Activated CD8-positive, alpha-beta T cell treated with anti-CD3 and anti-CD28 coated beads, Interleukin-2, amount 10 ng/mL, durations not matched to agents 7 days and 5 days (primary cell): ENCODE measurements at regions of chr4 and their contacts with region 1.

Region 1: GRCh38 chr4:118352843-118353533 is at the start of gene PRSS12:
- DNase-seq: peak; percentile 69
- ATAC-seq: peak; percentile 93
- H3K4me3 Mint-ChIP-seq: peak within 1 kb of the TSS; percentile 61
- H3K27ac Mint-ChIP-seq: no peak within 1 kb of the TSS
- H3K4me1 Mint-ChIP-seq: peaks cover 10% of the 10 kb centered on the region
- H3K27me3 Mint-ChIP-seq: peaks cover 64% of the 10 kb centered on the region
- total RNA-seq, gene PRSS12: not detected

Region 2: GRCh38 chr4:118278473-118279274 is 74.3 kb before region 1 on chr4:
- CTCF ChIA-PET with region 1: interaction called, 11 read pairs
- POLR2A ChIA-PET with region 1: no interaction called
- DNase-seq: peak; percentile 99
- ATAC-seq: peak; percentile 97
- H3K4me3 Mint-ChIP-seq: peak overlapping the region; percentile 88
- H3K27ac Mint-ChIP-seq: peak overlapping the region; percentile 95
- H3K4me1 Mint-ChIP-seq: peaks cover 28% of the 10 kb centered on the region
- H3K27me3 Mint-ChIP-seq: no peaks in the 10 kb centered on the region

Region 3: GRCh38 chr4:118335324-118335723 is 17.7 kb before region 1 on chr4:
- CTCF ChIA-PET with region 1: interaction called, 11 read pairs
- POLR2A ChIA-PET with region 1: no interaction called
- DNase-seq: no peak
- ATAC-seq: no peak
- H3K4me3 Mint-ChIP-seq: no peak overlapping the region
- H3K27ac Mint-ChIP-seq: no peak overlapping the region
- H3K4me1 Mint-ChIP-seq: no peaks in the 10 kb centered on the region
- H3K27me3 Mint-ChIP-seq: peaks cover 14% of the 10 kb centered on the region

Region 4: DNA sequence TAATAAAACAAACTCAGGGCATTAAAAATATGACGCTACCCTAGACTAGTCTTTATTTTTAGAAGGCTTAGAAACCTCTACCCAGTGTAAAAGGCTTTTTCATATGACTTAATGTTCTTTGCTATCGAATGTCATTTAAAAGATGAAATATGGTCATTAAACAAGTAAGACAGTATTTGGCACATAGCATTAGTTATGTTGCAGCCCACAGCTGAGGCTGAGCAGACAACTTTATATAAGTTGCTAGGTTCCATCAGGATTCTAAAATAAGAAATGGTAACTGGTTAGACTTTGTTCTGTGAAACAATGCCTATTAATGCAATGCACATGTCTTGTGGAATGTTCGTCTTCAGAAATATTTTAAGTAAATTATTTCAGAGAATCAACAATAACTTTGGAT is 10.2 kb after region 1 on chr4:
- CTCF ChIA-PET with region 1: interaction called, 15 read pairs
- POLR2A ChIA-PET with region 1: no interaction called
- DNase-seq: no peak
- ATAC-seq: no peak
- H3K4me3 Mint-ChIP-seq: no peak overlapping the region
- H3K27ac Mint-ChIP-seq: no peak overlapping the region
- H3K4me1 Mint-ChIP-seq: no peaks in the 10 kb centered on the region
- H3K27me3 Mint-ChIP-seq: peaks cover 12% of the 10 kb centered on the region

Region 5: GRCh38 chr4:118410138-118410537 is 57.1 kb after region 1 on chr4:
- CTCF ChIA-PET with region 1: no interaction called
- POLR2A ChIA-PET with region 1: no interaction called
- DNase-seq: no peak
- ATAC-seq: no peak
- H3K4me3 Mint-ChIP-seq: no peak overlapping the region
- H3K27ac Mint-ChIP-seq: no peak overlapping the region
- H3K4me1 Mint-ChIP-seq: no peaks in the 10 kb centered on the region
- H3K27me3 Mint-ChIP-seq: peaks cover 4% of the 10 kb centered on the region